Right ventricle myocardium superior (tissue), 1 donor: ENCODE measurements at regions of chr4 and their contacts with region 1.

Region 1: GRCh38 chr4:13548984-13549546 is 4.8 kb upstream of the NKX3-2 start:
- DNase-seq: peak; percentile 91
- ATAC-seq: peak; percentile 87

Region 2: GRCh38 chr4:12729384-12729783 is 819.7 kb before region 1 on chr4:
- intact Hi-C with region 1: loop called (anchors 2 kb)
- DNase-seq: no peak
- ATAC-seq: peak; percentile 41

Region 3: DNA sequence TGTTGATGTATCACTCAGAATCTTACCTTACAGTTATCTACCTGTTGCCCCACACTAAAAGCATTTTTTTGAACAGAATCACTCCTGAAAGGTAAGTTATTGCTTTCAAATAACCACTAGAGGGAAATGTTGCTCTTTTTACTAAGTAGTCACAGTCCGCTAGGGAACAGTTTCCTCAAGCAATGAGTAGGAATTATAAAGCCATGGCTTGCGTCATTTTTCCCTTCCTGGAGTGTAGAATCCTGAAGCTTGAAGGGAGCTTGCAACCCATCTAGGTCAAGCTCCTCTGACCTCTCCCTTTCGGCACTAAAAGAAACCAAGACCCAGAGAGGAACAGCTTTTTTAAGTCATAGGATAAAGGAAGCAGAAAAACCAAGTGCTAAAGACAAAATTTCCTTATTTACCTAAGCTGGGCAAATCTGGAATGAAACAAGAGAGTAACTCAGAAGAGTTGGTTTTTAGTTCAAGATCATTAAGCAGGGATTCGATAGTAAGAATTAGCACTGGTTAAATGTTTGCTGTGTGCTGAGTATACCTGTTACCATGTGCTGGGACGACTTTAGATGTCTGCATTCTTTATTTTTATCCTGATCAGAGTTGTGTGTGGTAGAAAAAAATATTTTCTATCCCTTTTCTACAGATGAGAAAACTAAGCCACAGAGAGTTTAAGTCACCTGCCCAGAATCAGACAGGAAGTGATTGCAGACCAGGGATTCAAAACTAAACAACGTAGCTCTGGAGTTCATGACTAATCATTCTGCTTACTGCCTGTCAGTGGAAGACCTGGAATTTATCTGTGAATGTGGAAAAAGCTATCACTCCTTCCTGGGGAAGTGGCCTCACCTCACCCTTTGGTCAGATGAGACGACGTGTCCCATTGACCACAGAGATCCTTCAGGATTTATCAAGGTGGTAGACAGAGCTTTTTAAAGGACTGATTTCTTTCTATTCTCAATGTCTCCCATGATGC is 696.4 kb before region 1 on chr4:
- intact Hi-C with region 1: loop called (anchors 5 kb)
- DNase-seq: no peak
- ATAC-seq: peak; percentile 86

Region 4: GRCh38 chr4:13430834-13431568 is 118.1 kb before region 1 on chr4:
- intact Hi-C with region 1: no loop called
- DNase-seq: no peak
- ATAC-seq: no peak